ENCODE measurements at regions of chr19 and their contacts with region 1.

Region 1: GRCh38 chr19:1929021-1929742 is 11.8 kb upstream of the CSNK1G2 start:
- DNase-seq: peak; percentile 84
- H3K4me3 Mint-ChIP-seq: peak overlapping the region; percentile 68
- H3K27ac Mint-ChIP-seq: no peak overlapping the region
- H3K4me1 Mint-ChIP-seq: peaks cover 16% of the 10 kb centered on the region
- H3K27me3 Mint-ChIP-seq: no peaks in the 10 kb centered on the region

Region 2: DNA sequence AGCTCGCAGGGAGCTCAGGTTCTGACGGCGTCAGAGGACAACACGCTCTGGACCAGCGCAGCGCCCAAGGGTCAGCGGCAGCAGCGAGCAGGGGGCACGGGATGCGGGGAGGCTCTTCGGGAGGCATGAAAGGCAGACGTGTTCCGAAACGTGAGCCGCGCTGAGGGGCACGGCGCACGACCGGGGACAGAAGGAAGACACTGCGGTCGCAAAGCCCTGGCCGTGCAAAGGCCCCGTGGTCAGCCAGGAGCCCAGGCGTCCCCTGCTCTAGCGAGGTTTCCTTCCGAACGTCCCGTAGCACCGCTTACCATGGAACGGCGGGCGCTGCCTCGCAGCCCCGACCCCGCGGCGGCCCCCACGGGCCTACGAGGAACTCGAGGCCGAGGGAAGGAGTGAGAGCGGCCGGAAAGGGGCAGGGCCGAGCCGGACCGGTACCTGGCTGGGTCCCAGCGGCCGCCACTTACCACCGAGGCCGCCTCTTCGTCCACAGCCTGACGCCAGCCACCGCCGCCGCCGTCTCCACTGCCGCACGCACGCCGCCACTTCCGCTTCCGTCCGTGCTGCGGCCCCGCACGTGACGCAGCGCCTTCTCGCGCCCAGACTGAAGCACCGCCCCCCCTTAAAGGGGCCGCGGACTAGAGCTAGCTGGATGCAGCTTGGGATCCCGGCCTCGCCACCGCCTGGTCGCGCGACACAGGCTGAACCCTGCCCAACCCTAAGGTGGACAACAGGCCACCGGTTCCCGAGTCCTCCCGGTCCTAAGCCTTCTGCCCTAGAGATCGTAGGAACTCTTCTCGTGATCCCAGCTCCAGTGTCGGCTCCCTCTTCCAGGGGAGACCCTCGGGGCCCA is 53.3 kb before region 1 on chr19:
- CTCF ChIA-PET with region 1: interaction called, 11 read pairs
- POLR2A ChIA-PET with region 1: interaction called, 3 read pairs
- intact Hi-C with region 1: no loop called
- DNase-seq: peak; percentile 93
- H3K4me3 Mint-ChIP-seq: peak overlapping the region; percentile 99
- H3K27ac Mint-ChIP-seq: peak overlapping the region; percentile 97
- H3K4me1 Mint-ChIP-seq: peaks cover 15% of the 10 kb centered on the region
- H3K27me3 Mint-ChIP-seq: no peaks in the 10 kb centered on the region

Region 3: DNA sequence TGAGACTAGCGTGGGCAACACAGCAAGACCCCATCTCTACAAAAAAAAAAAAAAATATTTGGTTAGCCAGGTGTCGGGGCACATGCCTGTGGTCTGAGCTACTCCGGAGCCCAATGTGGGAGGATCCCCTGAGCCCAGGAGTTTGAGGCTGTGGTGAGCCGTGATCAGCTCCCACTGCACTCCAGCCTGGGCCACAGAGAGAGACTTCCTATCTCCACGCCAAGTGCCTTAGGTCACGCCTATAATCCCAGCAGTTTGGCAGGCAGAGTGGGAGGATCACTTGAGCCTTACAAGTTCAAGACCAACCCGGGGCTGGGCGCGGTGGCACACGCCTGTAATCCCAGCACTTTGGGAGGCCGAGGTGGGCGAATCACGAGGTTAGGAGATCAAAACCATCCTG is 32.7 kb before region 1 on chr19:
- CTCF ChIA-PET with region 1: interaction called, 12 read pairs
- POLR2A ChIA-PET with region 1: interaction called, 4 read pairs
- intact Hi-C with region 1: no loop called
- DNase-seq: no peak
- H3K4me3 Mint-ChIP-seq: peak overlapping the region; percentile 84
- H3K27ac Mint-ChIP-seq: peak overlapping the region; percentile 98
- H3K4me1 Mint-ChIP-seq: peaks cover 26% of the 10 kb centered on the region
- H3K27me3 Mint-ChIP-seq: no peaks in the 10 kb centered on the region

Region 4: GRCh38 chr19:1942078-1942933 is 13.1 kb after region 1 on chr19:
- CTCF ChIA-PET with region 1: interaction called, 19 read pairs
- POLR2A ChIA-PET with region 1: no interaction called
- intact Hi-C with region 1: no loop called
- DNase-seq: peak; percentile 89
- H3K4me3 Mint-ChIP-seq: peak overlapping the region; percentile 84
- H3K27ac Mint-ChIP-seq: peak overlapping the region; percentile 94
- H3K4me1 Mint-ChIP-seq: peaks cover 30% of the 10 kb centered on the region
- H3K27me3 Mint-ChIP-seq: no peaks in the 10 kb centered on the region